AG04450 (cell line): ENCODE measurements at regions of chrX and their contacts with region 1.

Region 1: GRCh38 chrX:24054182-24055042 is at the start of gene EIF2S3:
- DNase-seq: peak; percentile 86
- H3K4me3 ChIP-seq: no peak within 1 kb of the TSS
- H3K27ac ChIP-seq: peak within 1 kb of the TSS; percentile 90
- H3K27me3 ChIP-seq: no peaks in the 10 kb centered on the region
- CTCF ChIP-seq: peak; percentile 55
- polyA plus RNA-seq, gene EIF2S3: 117 and 139 TPM in 2 replicates

Region 2: GRCh38 chrX:23907498-23908218 is 146.8 kb before region 1 on chrX and contains the starts of genes APOO and CXorf58:
- CTCF ChIA-PET with region 1: interaction called, 15 read pairs
- POLR2A ChIA-PET with region 1: interaction called, 3 read pairs
- DNase-seq: peak; percentile 77
- H3K4me3 ChIP-seq: peak within 1 kb of the TSS; percentile 68
- H3K27ac ChIP-seq: peak within 1 kb of the TSS; percentile 52
- H3K27me3 ChIP-seq: no peaks in the 10 kb centered on the region
- CTCF ChIP-seq: peak; percentile 67
- polyA plus RNA-seq, gene APOO: 14.8 and 16.3 TPM in 2 replicates
- polyA plus RNA-seq, gene CXorf58: not detected in 2 replicates

Region 3: GRCh38 chrX:24024819-24025740 is 29.3 kb before region 1 on chrX:
- CTCF ChIA-PET with region 1: interaction called, 25 read pairs
- POLR2A ChIA-PET with region 1: interaction called, 21 read pairs
- DNase-seq: peak; percentile 84
- H3K4me3 ChIP-seq: peak overlapping the region; percentile 75
- H3K27ac ChIP-seq: no peak overlapping the region
- H3K27me3 ChIP-seq: no peaks in the 10 kb centered on the region
- CTCF ChIP-seq: no peak